ENCODE measurements at regions of chr17 and their contacts with region 1.

Region 1: DNA sequence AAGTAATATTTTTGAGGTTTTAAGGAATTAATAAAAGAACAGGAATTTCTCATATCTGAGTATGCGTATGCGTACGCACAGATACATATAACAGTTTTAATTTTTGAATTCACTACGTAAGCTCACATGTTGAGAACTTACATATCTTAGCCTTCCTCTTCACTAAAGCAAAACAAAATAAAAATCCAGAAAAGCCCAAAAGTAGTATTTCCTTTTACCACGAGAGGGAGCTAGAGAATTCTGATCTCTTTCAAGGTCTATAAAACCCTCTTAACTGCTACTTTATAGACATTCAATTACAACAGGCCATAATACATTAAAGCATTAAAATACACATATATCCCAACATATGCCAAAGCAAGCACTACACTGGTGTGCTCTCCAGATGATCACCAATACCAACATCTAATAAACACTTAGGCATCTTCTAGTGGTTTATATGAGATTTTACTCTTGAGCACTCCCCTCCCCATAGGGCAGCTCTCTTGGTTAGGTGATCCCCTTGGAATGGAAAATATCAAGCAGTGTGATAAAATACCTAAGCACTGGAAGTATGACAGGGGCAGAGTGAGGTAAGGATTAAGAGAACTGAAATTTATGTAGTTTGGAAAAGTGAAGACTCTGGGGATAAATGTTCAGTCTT is 94.0 kb downstream of the SKAP1 start:
- DNase-seq: no peak
- H3K4me3 Mint-ChIP-seq: no peak overlapping the region
- H3K27ac Mint-ChIP-seq: no peak overlapping the region
- H3K4me1 Mint-ChIP-seq: peaks cover 16% of the 10 kb centered on the region
- H3K27me3 Mint-ChIP-seq: no peaks in the 10 kb centered on the region

Region 2: DNA sequence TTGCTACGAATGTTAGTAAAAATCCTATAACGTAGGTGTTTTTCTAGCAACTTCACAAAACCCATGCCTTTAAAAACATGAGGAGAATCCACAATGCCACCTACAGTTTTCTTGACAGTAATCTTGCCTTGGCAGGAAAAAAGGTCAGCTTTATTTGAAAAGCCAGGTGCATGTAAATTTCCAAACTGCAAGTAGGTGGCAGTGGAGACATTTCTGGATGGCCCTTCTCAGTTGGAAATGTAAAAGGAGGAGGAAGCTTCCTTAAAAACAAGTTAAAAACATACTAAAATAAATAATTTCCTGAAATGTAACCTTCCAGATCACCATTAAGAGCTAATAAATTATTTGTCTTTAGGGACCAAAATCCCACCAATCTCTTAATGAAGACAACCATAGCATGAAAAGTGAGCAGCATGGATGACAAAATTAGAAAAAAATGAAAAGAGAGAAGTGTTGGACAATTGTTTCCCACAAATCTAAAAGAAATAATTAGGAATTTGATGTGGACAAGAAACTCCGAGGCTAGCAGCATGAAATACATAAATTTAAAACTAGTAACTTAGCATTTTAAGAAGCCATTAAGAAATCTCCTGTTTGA is 76.2 kb before region 1 on chr17:
- intact Hi-C with region 1: loop called (anchors 5 kb)
- DNase-seq: no peak
- H3K4me3 Mint-ChIP-seq: no peak overlapping the region
- H3K27ac Mint-ChIP-seq: no peak overlapping the region
- H3K4me1 Mint-ChIP-seq: peaks cover 6% of the 10 kb centered on the region
- H3K27me3 Mint-ChIP-seq: no peaks in the 10 kb centered on the region

Region 3: GRCh38 chr17:48295362-48296288 is 40.4 kb before region 1 on chr17:
- intact Hi-C with region 1: loop called (anchors 1 kb)
- DNase-seq: no peak
- H3K4me3 Mint-ChIP-seq: peak overlapping the region; percentile 78
- H3K27ac Mint-ChIP-seq: peak overlapping the region; percentile 92
- H3K4me1 Mint-ChIP-seq: peaks cover 64% of the 10 kb centered on the region
- H3K27me3 Mint-ChIP-seq: no peaks in the 10 kb centered on the region

Region 4: DNA sequence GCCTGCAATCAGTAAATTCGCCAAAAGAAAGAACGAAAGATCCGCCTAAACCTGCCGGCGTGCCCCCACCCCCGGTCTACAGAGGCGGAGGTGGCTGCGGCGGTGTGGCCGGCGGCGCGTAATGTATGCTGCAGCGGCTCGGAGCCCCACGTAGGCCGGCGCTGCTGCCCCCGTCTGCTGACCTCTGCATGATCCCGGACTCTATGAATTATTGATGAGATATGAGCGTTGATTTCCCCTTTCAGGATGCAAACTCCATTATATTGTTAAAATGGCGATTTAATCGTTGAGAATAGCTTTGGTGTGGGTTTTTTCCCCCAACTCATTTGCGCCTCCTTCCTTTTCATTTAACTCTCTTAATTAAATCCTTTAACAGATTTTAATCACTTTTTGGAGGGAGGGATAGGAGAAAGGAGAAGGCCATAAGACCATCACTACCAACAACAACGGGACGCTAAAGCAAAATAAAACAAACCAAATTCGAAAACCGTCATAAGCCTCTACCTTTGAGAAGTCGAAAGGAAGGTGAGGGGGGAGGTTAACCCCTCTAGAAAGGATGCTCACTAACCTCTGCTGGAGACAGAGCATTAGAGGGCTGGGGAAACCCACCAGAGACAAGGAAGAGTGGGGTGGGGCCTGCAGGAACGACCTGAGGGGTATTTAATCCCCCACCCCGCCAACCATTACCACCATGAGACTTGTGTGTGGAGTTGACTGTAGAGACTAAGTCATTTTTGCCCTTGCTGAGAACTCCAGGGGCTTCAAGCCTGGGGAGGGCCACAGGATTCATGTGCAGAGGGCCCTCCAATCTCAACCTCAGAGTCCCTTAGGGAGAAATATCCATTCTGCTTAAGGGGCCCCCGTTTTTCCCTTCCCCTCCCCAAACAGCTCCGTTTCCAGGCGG is 250.6 kb after region 1 on chr17:
- intact Hi-C with region 1: no loop called
- DNase-seq: no peak
- H3K4me3 Mint-ChIP-seq: peak overlapping the region; percentile 85
- H3K27ac Mint-ChIP-seq: peak overlapping the region; percentile 73
- H3K4me1 Mint-ChIP-seq: peaks cover 73% of the 10 kb centered on the region
- H3K27me3 Mint-ChIP-seq: peaks cover 69% of the 10 kb centered on the region

Region 5: GRCh38 chr17:48756830-48757251 is 420.9 kb after region 1 on chr17:
- intact Hi-C with region 1: loop called (anchors 10 kb)
- DNase-seq: no peak
- H3K4me3 Mint-ChIP-seq: no peak overlapping the region
- H3K27ac Mint-ChIP-seq: no peak overlapping the region
- H3K4me1 Mint-ChIP-seq: peaks cover 10% of the 10 kb centered on the region
- H3K27me3 Mint-ChIP-seq: peaks cover 78% of the 10 kb centered on the region

Measured in activated T-helper 1 cell treated with anti-CD3 and anti-CD28 coated beads, Interleukin-12 subunit alpha, Interleukin-12 subunit beta, Interleukin-2, Interleukin-4 antibody, amounts not matched to agents 30 ng/mL and 10 ng/mL and 1 ng/mL, durations not matched to agents 14 hours and 24 hours and 36 hours (primary cell).